ENCODE measurements at regions of chr6 and their contacts with region 1.

Region 1: GRCh38 chr6:31729515-31729978 is 448 bp upstream of the DDAH2 start:
- DNase-seq: peak; percentile 92 to 94
- ATAC-seq: peak; percentile 84 to 92 (median 90)
- H3K4me3 ChIP-seq: peak overlapping the region; percentile 66 to 95 (median 78)
- H3K27ac ChIP-seq: peak overlapping the region; percentile 93 to 97 (median 94)
- H3K4me1 ChIP-seq: peaks cover 12 to 82% (median 52%) of the 10 kb centered on the region in 9 donors
- H3K27me3 ChIP-seq: no peaks in the 10 kb centered on the region
- CTCF ChIP-seq: peak in 6 of 9 donors; percentile 46 to 82 (median 67)

Region 2: DNA sequence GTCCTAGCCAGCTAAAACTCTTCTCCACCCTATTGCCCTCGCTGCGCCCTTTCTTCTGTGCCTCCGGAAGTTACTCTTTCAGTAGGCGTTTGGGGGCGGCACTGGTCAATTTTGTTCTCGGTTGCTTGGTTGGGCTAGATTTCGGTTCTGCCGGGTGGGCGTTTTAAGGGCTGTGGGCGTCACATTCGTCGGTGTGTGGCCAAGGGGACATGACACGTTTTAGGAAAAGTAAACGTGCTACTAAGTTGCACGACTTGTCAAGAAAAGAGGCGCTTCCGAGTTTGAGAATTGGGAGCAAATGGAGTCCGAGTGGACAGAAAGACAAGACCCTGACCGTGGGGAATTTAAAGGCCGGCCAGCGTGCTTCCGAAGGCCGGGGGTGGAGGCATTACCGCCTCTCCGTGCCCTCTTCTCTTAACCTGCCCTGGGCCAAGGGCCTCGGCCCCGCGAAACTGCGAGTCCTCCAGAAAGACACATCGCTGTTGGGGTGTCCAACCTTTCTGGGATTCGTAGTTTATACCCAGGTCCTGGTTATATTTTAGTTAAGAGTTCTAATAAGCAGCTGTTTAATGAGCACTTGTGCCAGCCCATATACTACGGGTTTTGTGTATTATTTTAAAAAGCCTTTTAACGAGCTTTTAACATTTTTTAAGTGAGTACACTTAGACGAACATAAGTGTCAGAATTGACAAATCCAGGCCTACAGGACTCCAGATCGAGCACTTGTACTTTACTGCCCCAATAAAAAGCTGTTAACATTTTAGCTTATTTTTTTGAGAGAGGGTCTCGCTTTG is 76.4 kb before region 1 on chr6:
- intact Hi-C with region 1: no loop called
- DNase-seq: peak; percentile 76 to 94
- ATAC-seq: peak; percentile 69 to 86 (median 82)
- H3K4me3 ChIP-seq: peak overlapping the region; percentile 51 to 93 (median 76)
- H3K27ac ChIP-seq: peak overlapping the region; percentile 85 to 100 (median 98)
- H3K4me1 ChIP-seq: peaks cover 0 to 45% (median 36%) of the 10 kb centered on the region in 9 donors
- H3K27me3 ChIP-seq: no peaks in the 10 kb centered on the region
- CTCF ChIP-seq: peak in 3 of 9 donors; percentile 14 to 29 (median 19)

Region 3: GRCh38 chr6:31701666-31702404 is 27.7 kb before region 1 on chr6:
- intact Hi-C with region 1: loop called in 1 of 10 experiments (anchors 1 kb)
- DNase-seq: peak; percentile 43 to 53
- ATAC-seq: peak in 1 of 8 donors; percentile 2
- H3K4me3 ChIP-seq: peak overlapping the region; percentile 56 to 89 (median 78)
- H3K27ac ChIP-seq: peak overlapping the region in 9 of 10 donors; percentile 92 to 99 (median 97)
- H3K4me1 ChIP-seq: peaks cover 11 to 41% (median 22%) of the 10 kb centered on the region in 9 donors
- H3K27me3 ChIP-seq: no peaks in the 10 kb centered on the region
- CTCF ChIP-seq: no peak

Region 4: DNA sequence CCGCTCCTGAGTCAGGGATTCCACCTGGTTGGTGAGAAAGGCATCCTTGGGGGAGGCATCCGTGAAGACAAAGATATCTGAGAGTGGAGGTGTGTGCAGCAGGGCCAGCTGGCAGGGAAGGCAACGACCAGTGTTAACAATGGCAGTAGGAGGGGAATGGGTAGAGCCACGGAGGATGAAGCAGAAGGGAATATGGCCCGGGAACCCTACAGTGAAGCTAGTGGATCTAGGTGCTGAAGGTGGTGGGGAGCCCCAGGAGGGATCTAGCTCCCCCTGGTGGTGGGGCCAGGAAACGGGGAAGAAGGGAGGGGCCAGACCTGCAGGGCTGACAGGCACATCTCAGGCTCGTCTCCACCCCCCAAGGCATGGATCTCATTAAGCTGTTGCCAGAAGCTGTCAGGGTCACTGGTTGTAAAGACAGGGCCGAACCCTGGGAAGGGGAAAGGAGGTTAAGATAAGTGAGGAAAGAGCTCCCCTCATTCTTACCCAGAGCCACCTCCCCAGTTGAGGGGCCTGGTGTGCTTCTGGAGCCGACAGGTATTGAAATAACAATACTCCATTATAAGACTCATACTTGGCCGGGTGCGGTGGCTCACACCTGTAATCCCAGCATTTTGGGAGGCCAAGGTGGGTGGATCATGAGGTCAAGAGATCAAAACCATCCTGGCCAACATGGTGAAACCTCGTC is 40.3 kb after region 1 on chr6:
- intact Hi-C with region 1: loop called in 3 of 10 experiments (anchors 5 kb)
- DNase-seq: peak; percentile 62 to 76
- ATAC-seq: peak in 7 of 8 donors; percentile 49 to 73 (median 65)
- H3K4me3 ChIP-seq: no peak overlapping the region
- H3K27ac ChIP-seq: peak overlapping the region in 1 of 10 donors; percentile 75
- H3K4me1 ChIP-seq: peaks cover 0 to 30% (median 0%) of the 10 kb centered on the region in 9 donors
- H3K27me3 ChIP-seq: no peaks in the 10 kb centered on the region
- CTCF ChIP-seq: peak; percentile 46 to 90 (median 71)

Region 5: GRCh38 chr6:31795616-31796298 is 66.2 kb after region 1 on chr6 and contains the start of gene VARS1:
- intact Hi-C with region 1: loop called in 2 of 10 experiments (anchors 5 to 10 kb)
- DNase-seq: peak; percentile 90 to 95
- ATAC-seq: peak; percentile 92 to 96 (median 94)
- H3K4me3 ChIP-seq: peak within 1 kb of the TSS; percentile 57 to 99 (median 86)
- H3K27ac ChIP-seq: peak within 1 kb of the TSS; percentile 84 to 99 (median 96)
- H3K4me1 ChIP-seq: peaks cover 5 to 39% (median 14%) of the 10 kb centered on the region in 9 donors
- H3K27me3 ChIP-seq: no peaks in the 10 kb centered on the region
- CTCF ChIP-seq: peak; percentile 65 to 94 (median 88)
- total RNA-seq, gene VARS1: 22.4 to 43.4 (median 29.5) TPM

Region 6: DNA sequence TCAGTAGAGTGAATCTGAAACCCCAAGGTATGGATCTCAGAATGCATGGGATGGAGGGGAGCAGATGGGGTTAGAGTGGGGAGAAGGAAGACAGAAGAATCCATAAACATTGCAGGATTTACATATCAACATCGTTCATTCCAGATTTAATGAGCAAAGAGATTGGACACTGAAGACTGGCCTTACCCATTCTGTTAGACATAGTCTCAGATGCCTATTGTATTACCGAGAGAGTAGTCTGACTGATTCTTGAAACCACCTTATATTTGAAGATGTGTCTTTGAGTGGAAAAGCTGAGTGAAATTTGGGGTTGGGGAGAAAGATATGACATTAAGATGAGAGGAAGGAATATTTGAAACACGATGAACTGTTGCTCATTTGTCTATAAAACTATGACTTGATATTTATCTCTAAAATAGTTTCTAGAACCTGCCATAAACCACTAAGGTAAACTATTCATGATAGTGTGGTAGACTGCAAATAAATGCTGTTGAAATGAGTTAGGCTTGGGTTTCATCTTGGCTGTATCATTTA is 715.8 kb after region 1 on chr6:
- intact Hi-C with region 1: no loop called
- DNase-seq: no peak
- ATAC-seq: no peak
- H3K4me3 ChIP-seq: no peak overlapping the region
- H3K27ac ChIP-seq: no peak overlapping the region
- H3K4me1 ChIP-seq: peaks cover 0 to 10% (median 0%) of the 10 kb centered on the region in 9 donors
- H3K27me3 ChIP-seq: peaks cover 0 to 8% (median 0%) of the 10 kb centered on the region in 7 donors
- CTCF ChIP-seq: no peak

Measured in heart right ventricle (tissue), 16 donors.